ENCODE measurements at regions of chr11 and their contacts with region 1.

Region 1: GRCh38 chr11:27472398-27473016 is at the start of gene LGR4:
- DNase-seq: peak; percentile 96
- H3K4me3 ChIP-seq: peak within 1 kb of the TSS; percentile 64 to 85 (median 80)
- H3K27ac ChIP-seq: peak within 1 kb of the TSS; percentile 99
- H3K4me1 ChIP-seq: peaks cover 33% of the 10 kb centered on the region
- H3K27me3 ChIP-seq: no peaks in the 10 kb centered on the region
- CTCF ChIP-seq: no peak
- total RNA-seq, gene LGR4: 27.8 to 45.8 TPM

Region 2: GRCh38 chr11:27183672-27184457 is 288.6 kb before region 1 on chr11:
- CTCF ChIA-PET with region 1: no interaction called
- dilution Hi-C with region 1: loop called (anchors 25 kb)
- in situ Hi-C with region 1: loop called in 1 of 2 experiments (anchors 5 kb)
- intact Hi-C with region 1: loop called (anchors 1 kb)
- DNase-seq: peak; percentile 47
- H3K4me3 ChIP-seq: no peak overlapping the region
- H3K27ac ChIP-seq: no peak overlapping the region
- H3K4me1 ChIP-seq: peaks cover 10% of the 10 kb centered on the region
- H3K27me3 ChIP-seq: no peaks in the 10 kb centered on the region
- CTCF ChIP-seq: peak; percentile 66 to 77

Region 3: DNA sequence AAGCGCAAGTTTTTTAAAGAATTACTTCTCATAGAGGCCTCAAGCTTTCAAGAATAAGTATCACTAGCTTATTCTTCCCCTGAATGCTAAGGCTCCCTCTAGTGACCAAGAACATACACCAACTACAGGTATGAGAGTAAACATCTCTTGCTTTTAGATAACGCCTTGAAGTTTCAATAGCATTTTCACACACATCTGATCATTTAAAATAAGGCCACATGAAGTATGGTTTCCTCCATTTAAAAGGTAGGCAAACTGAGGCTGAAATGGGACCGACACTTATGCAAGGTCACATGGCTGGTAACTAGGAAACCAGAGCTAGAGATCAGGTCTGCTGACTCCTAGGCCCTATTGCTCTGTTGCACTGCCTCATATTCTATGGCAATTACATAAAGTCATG is 176.0 kb before region 1 on chr11:
- CTCF ChIA-PET with region 1: no interaction called
- dilution Hi-C with region 1: no loop called
- in situ Hi-C with region 1: no loop called
- intact Hi-C with region 1: loop called (anchors 5 kb)
- DNase-seq: peak; percentile 45
- H3K4me3 ChIP-seq: no peak overlapping the region
- H3K27ac ChIP-seq: no peak overlapping the region
- H3K4me1 ChIP-seq: peaks cover 10% of the 10 kb centered on the region
- H3K27me3 ChIP-seq: no peaks in the 10 kb centered on the region
- CTCF ChIP-seq: peak; percentile 74 to 80

Region 4: DNA sequence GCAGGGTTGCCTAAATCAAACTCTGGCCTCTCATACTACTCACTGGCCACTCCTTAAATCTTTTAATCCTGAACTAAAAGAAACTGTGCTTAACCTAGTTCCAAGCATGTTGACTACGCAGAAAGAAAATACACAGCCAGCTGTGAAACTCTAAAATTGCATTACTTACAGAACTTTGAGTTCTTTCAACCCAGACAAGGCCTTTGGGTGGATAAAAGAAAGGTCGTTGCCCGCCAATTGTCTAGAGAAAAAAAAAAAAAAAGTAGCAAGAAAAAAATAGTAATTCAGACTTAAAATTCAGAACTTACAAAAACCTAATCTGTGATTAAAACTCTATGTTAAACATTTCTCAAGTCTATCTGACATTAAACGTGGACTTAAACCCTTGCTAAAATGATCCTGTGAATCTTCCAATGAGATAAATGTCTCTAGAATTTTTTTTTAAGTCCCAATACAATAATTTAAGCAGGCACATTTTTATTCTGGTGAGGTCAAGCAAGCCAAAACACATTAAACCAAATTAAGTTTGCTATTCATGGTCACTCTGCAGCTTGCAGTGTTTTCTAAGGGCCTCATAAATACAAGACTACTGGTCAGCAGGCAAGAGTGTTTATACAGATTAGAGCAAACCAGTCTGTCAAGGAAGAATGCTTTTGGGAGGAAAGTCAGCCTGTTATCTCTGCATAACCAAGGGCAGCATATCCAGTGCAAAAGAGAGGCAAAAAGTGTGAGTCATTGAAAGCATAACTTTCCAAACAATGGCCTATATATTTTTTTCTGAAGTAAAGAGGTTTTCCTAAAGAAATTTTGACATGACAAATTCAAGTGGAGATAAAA is 80.0 kb before region 1 on chr11:
- CTCF ChIA-PET with region 1: interaction called, 4 read pairs
- dilution Hi-C with region 1: no loop called
- in situ Hi-C with region 1: no loop called
- intact Hi-C with region 1: loop called (anchors 5 kb)
- DNase-seq: peak; percentile 56
- H3K4me3 ChIP-seq: no peak overlapping the region
- H3K27ac ChIP-seq: no peak overlapping the region
- H3K4me1 ChIP-seq: peaks cover 48% of the 10 kb centered on the region
- H3K27me3 ChIP-seq: no peaks in the 10 kb centered on the region
- CTCF ChIP-seq: no peak

Region 5: DNA sequence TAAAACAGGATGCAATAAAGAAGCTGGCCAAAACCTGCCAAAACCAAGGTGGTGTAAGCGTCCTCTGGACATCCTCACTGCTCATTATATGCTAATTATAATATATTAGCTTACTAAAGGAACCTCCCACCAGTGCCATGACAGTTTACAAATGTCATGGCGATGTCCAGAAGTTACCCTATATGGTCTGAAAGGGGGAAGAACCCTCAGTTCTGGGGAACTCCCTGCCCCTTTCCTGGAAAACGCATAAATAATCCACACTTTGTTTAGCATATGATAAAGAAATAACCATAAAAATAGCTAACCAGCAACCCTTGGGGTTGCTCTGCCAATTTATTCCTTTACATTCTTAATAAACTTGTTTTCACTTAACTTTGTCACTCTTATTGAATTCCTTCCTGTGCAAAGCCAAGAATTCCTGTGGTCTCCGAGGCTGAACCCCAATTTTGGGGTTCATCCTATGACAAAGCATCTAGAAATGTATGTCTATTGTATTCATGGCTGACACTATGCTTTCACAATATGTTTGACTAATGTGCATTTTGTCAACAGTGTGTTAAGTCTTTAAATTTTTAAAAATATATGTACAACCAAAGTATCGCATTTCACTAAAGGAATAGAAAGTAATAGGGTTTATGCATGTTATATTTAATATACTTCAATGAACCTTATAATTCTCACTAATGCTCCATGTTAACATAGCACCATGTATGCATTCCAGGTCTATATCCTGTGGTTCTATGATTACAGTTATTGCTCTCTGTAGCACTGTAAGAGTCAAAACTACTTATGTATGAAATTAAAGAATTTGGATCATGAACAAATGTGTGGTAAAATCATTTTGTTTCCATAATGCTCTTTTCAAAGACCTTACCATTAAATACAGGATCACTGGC is 25.0 kb before region 1 on chr11:
- CTCF ChIA-PET with region 1: no interaction called
- dilution Hi-C with region 1: no loop called
- in situ Hi-C with region 1: no loop called
- intact Hi-C with region 1: loop called (anchors 1 kb)
- DNase-seq: peak; percentile 65
- H3K4me3 ChIP-seq: peak overlapping the region in 1 of 3 experiments; percentile 2
- H3K27ac ChIP-seq: peak overlapping the region; percentile 99
- H3K4me1 ChIP-seq: peaks cover 44% of the 10 kb centered on the region
- H3K27me3 ChIP-seq: no peaks in the 10 kb centered on the region
- CTCF ChIP-seq: no peak